H1 (cell line): ENCODE measurements at regions of chr14 and their contacts with region 1.

Region 1: GRCh38 chr14:64800000-64800399 is 79.7 kb downstream of the SPTB start:
- DNase-seq: no peak
- H3K4me3 ChIP-seq: no peak overlapping the region
- H3K27ac ChIP-seq: no peak overlapping the region
- H3K4me1 ChIP-seq: no peaks in the 10 kb centered on the region
- H3K27me3 ChIP-seq: no peaks in the 10 kb centered on the region
- CTCF ChIP-seq: peak; percentile 47 to 53 (median 51)
- EP300 ChIP-seq: no peak
- POLR2A ChIP-seq: no peak
- RAD21 ChIP-seq: peak; percentile 10 to 37; a peak in 1 of 4 replicates

Region 2: GRCh38 chr14:64772393-64772950 is 27.5 kb before region 1 on chr14:
- CTCF ChIA-PET with region 1: interaction called, 96 read pairs
- POLR2A ChIA-PET with region 1: interaction called, 3 read pairs
- DNase-seq: no peak
- H3K4me3 ChIP-seq: no peak overlapping the region
- H3K27ac ChIP-seq: no peak overlapping the region
- H3K4me1 ChIP-seq: no peaks in the 10 kb centered on the region; a peak in 1 of 7 replicates
- H3K27me3 ChIP-seq: no peaks in the 10 kb centered on the region
- CTCF ChIP-seq: peak in 2 of 3 experiments; percentile 45 to 66; a peak in 3 of 4 replicates
- EP300 ChIP-seq: no peak
- POLR2A ChIP-seq: no peak
- RAD21 ChIP-seq: peak; percentile 26 to 54; a peak in 3 of 4 replicates

Region 3: DNA sequence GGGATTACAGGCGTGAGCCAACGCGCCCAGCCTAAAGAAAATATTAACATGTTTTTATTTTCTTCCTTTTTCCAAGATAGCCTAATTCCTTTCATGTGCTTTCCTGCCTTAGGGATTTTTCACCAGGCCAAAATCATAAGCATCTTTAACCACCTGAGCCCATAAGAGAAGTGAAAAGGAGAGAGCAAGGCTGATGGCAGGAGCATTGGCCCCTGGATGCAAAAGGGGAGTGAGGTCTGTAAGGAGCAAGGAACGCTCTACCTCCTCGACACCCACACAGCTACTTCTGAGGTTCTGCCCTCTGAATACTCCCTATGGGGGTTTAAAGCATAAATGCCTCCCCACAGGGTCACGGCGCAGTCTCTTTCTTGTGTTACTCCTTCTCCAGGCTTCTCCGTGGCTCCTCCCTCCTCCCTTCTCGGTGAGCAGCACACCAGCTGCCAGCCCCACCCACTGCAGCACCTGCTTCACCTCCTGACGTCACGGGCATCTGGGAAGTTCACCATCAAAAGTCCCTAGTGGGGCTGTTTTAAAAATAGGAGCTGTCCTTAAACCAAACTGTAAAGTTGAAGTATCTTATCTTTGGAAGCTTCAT is 12.3 kb after region 1 on chr14:
- CTCF ChIA-PET with region 1: interaction called, 96 read pairs
- POLR2A ChIA-PET with region 1: no interaction called
- DNase-seq: peak in 1 of 2 experiments; percentile 71
- H3K4me3 ChIP-seq: peak overlapping the region in 1 of 4 experiments; percentile 19; a peak in 1 of 8 replicates
- H3K27ac ChIP-seq: no peak overlapping the region
- H3K4me1 ChIP-seq: no peaks in the 10 kb centered on the region; a peak in 1 of 7 replicates
- H3K27me3 ChIP-seq: no peaks in the 10 kb centered on the region; a peak in 1 of 7 replicates
- CTCF ChIP-seq: no peak
- EP300 ChIP-seq: no peak
- POLR2A ChIP-seq: no peak
- RAD21 ChIP-seq: no peak

Region 4: GRCh38 chr14:64870160-64870559 is 70.2 kb after region 1 on chr14:
- CTCF ChIA-PET with region 1: interaction called, 19 read pairs
- POLR2A ChIA-PET with region 1: no interaction called
- DNase-seq: no peak
- H3K4me3 ChIP-seq: no peak overlapping the region
- H3K27ac ChIP-seq: no peak overlapping the region
- H3K4me1 ChIP-seq: peaks cover 0 to 11% (median 3%) of the 10 kb centered on the region in 4 experiments; a peak in 3 of 7 replicates
- H3K27me3 ChIP-seq: no peaks in the 10 kb centered on the region; a peak in 2 of 7 replicates
- CTCF ChIP-seq: no peak
- EP300 ChIP-seq: no peak
- POLR2A ChIP-seq: no peak
- RAD21 ChIP-seq: no peak

Region 5: GRCh38 chr14:64899958-64900357 is 100.0 kb after region 1 on chr14:
- CTCF ChIA-PET with region 1: interaction called, 23 read pairs
- POLR2A ChIA-PET with region 1: no interaction called
- DNase-seq: no peak
- H3K4me3 ChIP-seq: no peak overlapping the region
- H3K27ac ChIP-seq: no peak overlapping the region
- H3K4me1 ChIP-seq: no peaks in the 10 kb centered on the region
- H3K27me3 ChIP-seq: no peaks in the 10 kb centered on the region
- CTCF ChIP-seq: no peak
- EP300 ChIP-seq: no peak
- POLR2A ChIP-seq: no peak
- RAD21 ChIP-seq: no peak

Region 6: GRCh38 chr14:65012353-65012887 is 212.4 kb after region 1 on chr14:
- CTCF ChIA-PET with region 1: no interaction called
- POLR2A ChIA-PET with region 1: no interaction called
- DNase-seq: no peak
- H3K4me3 ChIP-seq: no peak overlapping the region
- H3K27ac ChIP-seq: no peak overlapping the region
- H3K4me1 ChIP-seq: peaks cover 0 to 2% (median 0%) of the 10 kb centered on the region in 4 experiments; a peak in 1 of 7 replicates
- H3K27me3 ChIP-seq: no peaks in the 10 kb centered on the region
- CTCF ChIP-seq: no peak
- EP300 ChIP-seq: no peak
- POLR2A ChIP-seq: no peak
- RAD21 ChIP-seq: no peak

Region 7: DNA sequence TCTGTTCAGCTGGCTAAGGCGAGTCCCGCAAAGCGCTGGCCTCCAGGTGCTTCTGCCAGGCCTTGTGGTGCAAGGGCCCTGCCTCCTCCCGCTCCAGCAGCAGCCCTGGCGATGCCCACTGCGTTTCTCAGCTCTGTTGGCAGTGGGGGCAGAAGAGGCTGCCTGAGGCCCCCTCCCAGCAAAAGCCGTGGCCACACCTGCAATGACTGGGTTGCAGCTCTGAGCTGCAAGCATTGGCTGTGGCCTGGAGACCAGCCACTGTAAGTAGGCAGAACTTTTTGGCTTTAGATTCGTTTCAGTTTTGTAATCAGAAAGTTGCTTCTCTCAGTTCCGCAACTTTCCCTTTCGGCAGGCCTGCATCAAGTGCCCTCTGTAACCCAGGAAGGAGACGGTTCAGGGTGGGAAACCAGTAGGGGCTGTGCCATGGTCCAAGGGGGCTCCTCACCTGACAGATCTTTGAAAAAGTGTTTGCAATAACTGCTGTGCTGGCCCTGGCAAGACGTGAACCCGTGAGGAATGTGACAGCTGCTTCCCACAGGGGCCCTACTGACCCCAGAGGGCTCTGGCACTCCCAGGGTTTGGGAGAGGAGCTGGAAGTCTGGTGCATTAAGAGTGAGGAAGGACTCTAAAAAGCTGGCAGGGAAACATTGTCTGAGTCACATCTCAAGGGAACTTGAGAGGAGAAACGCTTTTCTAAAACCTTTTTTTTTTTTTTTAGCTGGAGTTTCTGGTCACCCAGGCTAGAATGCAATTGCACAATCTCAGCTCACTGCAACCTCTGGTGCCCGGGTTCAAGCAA is 356.8 kb after region 1 on chr14:
- CTCF ChIA-PET with region 1: no interaction called
- POLR2A ChIA-PET with region 1: no interaction called
- DNase-seq: no peak
- H3K4me3 ChIP-seq: no peak overlapping the region
- H3K27ac ChIP-seq: no peak overlapping the region
- H3K4me1 ChIP-seq: no peaks in the 10 kb centered on the region; a peak in 1 of 7 replicates
- H3K27me3 ChIP-seq: no peaks in the 10 kb centered on the region
- CTCF ChIP-seq: no peak
- EP300 ChIP-seq: no peak
- POLR2A ChIP-seq: no peak
- RAD21 ChIP-seq: no peak